GM12878 (cell line): ENCODE measurements at regions of chr19 and their contacts with region 1.

Region 1: DNA sequence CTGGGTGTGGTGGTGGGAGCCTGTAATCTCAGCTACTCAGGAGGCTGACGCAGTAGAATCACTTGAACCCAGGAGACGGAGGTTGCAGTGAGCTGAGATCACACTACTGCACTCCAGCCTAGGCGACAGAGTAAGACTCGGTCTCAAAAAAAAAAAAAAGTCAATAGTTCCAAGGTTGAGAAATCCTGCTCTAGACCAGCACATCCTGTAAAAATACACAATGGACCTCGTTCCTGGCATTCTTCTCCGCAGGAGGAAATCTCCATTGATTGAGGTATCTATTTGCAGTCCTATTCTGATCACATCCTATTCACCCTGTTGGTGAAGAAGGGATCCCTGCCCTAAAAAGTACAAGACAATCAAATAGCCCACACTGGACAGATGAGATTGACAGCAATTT is 15.2 kb downstream of the ZFP14 start:
- DNase-seq: no peak
- ATAC-seq: no peak
- H3K4me3 ChIP-seq: no peak overlapping the region
- H3K27ac ChIP-seq: no peak overlapping the region
- H3K4me1 ChIP-seq: no peaks in the 10 kb centered on the region
- H3K27me3 ChIP-seq: no peaks in the 10 kb centered on the region
- CTCF ChIP-seq: no peak
- EP300 ChIP-seq: no peak
- POLR2A ChIP-seq: no peak
- RAD21 ChIP-seq: no peak

Region 2: DNA sequence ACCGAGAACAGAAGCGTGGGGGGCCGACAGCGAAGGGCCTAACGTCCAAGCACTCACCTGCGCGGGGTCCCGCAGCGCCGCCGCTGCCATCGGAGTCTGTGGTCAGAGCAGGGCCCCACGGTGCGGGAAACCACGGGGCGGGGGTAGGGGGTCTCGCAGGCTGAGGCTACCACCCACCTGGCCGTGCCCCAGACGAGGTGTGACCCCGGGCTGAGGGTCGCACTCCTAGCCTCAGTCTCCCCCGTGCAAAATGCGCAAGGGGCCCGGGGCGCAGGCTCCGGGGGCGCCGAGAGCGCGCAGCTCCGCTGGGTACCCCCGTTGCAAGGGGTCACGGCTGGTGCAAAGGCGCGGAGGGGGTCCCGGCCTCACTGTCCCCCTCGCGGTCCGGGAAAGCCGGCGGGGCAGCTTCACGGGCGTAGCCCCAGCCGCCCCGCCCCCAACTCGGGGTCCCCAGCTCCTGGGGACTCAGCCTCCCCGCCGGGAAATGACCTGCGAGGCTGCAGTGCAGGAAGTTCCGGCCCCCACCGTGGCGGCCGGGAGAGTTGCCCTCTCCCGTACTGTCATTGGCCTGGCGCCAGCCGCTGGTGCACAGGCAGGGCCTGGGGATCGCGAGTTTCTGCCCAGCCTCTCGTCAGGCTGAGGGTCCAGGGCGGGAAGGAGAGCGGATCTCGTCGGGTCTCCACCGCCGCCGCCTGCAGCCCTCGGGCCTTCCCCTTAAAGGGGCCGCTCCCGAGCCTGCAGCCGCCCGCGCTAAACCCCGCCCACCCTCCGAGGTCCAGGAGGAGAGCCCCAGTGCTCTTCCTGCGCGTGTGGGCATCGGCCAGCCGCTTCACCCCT is 1400.1 kb before region 1 on chr19 and contains the start of gene ZNF792:
- CTCF ChIA-PET with region 1: no interaction called
- POLR2A ChIA-PET with region 1: no interaction called
- RAD21 ChIA-PET with region 1: no interaction called
- SMC1A ChIA-PET with region 1: no interaction called
- in situ Hi-C with region 1: loop called (anchors 25 kb)
- intact Hi-C with region 1: no loop called
- DNase-seq: no peak
- ATAC-seq: peak; percentile 95
- H3K4me3 ChIP-seq: peak within 1 kb of the TSS; percentile 80
- H3K27ac ChIP-seq: peak within 1 kb of the TSS; percentile 57; the same call in 1 of the 2 replicates
- H3K4me1 ChIP-seq: peaks cover 4% of the 10 kb centered on the region
- H3K27me3 ChIP-seq: no peaks in the 10 kb centered on the region
- CTCF ChIP-seq: no peak
- EP300 ChIP-seq: no peak
- POLR2A ChIP-seq: peak; percentile 66
- RAD21 ChIP-seq: no peak
- polyA plus RNA-seq, gene ZNF792: 0.53 to 0.63 TPM

Region 3: DNA sequence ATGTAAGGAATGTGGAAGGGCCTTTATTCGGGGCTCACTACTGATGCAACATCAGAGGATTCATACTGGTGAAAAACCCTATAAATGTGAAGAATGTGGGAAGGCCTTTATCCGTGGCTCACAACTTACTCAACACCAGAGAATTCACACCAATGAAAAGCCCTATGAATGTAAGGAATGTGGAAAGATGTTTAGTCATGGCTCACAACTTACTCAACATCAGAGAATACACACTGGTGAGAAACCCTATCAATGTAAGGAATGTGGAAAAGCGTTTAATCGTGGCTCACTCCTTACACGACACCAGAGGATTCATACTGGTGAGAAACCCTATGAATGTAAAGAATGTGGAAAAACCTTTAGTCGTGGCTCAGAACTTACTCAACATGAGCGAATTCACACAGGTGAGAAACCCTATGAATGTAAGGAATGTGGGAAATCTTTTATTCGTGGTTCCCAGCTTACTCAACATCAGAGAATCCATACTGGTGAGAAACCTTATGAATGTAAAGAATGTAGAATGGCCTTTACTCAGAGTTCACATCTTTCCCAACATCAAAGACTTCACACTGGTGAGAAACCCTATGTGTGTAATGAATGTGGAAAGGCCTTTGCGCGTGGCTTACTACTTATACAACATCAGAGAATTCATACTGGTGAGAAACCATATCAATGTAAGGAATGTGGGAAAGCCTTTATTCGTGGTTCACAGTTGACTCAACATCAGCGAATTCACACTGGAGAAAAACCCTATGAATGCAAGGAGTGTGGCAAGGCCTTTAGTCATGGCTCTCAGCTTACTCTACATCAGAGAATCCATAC is 764.4 kb after region 1 on chr19:
- CTCF ChIA-PET with region 1: no interaction called
- POLR2A ChIA-PET with region 1: no interaction called
- RAD21 ChIA-PET with region 1: no interaction called
- SMC1A ChIA-PET with region 1: no interaction called
- in situ Hi-C with region 1: no loop called
- intact Hi-C with region 1: no loop called
- DNase-seq: no peak
- ATAC-seq: no peak
- H3K4me3 ChIP-seq: no peak overlapping the region
- H3K27ac ChIP-seq: no peak overlapping the region
- H3K4me1 ChIP-seq: no peaks in the 10 kb centered on the region
- H3K27me3 ChIP-seq: no peaks in the 10 kb centered on the region
- CTCF ChIP-seq: no peak
- EP300 ChIP-seq: no peak
- POLR2A ChIP-seq: no peak
- RAD21 ChIP-seq: no peak